ENCODE measurements at regions of chrX and their contacts with region 1.

Region 1: GRCh38 chrX:7996414-7996813 is 69.2 kb upstream of the PNPLA4 start:
- DNase-seq: peak in 1 of 2 experiments; percentile 21
- H3K4me3 ChIP-seq: no peak overlapping the region
- H3K4me3 Mint-ChIP-seq: no peak overlapping the region
- H3K27ac Mint-ChIP-seq: no peak overlapping the region
- H3K4me1 ChIP-seq: no peaks in the 10 kb centered on the region
- H3K4me1 Mint-ChIP-seq: no peaks in the 10 kb centered on the region
- H3K27me3 ChIP-seq: no peaks in the 10 kb centered on the region
- H3K27me3 Mint-ChIP-seq: no peaks in the 10 kb centered on the region
- CTCF ChIP-seq: peak; percentile 36 to 39

Region 2: GRCh38 chrX:8235026-8235425 is 238.6 kb after region 1 on chrX:
- CTCF ChIA-PET with region 1: no interaction called
- POLR2A ChIA-PET with region 1: no interaction called
- intact Hi-C with region 1: loop called (anchors 5 kb)
- DNase-seq: no peak
- H3K4me3 ChIP-seq: no peak overlapping the region
- H3K4me3 Mint-ChIP-seq: no peak overlapping the region
- H3K27ac Mint-ChIP-seq: no peak overlapping the region
- H3K4me1 ChIP-seq: no peaks in the 10 kb centered on the region
- H3K4me1 Mint-ChIP-seq: no peaks in the 10 kb centered on the region
- H3K27me3 ChIP-seq: no peaks in the 10 kb centered on the region
- H3K27me3 Mint-ChIP-seq: no peaks in the 10 kb centered on the region
- CTCF ChIP-seq: no peak

Region 3: GRCh38 chrX:8364369-8365141 is 368.1 kb after region 1 on chrX:
- CTCF ChIA-PET with region 1: no interaction called
- POLR2A ChIA-PET with region 1: no interaction called
- intact Hi-C with region 1: loop called (anchors 10 kb)
- DNase-seq: peak; percentile 35 to 43
- H3K4me3 ChIP-seq: no peak overlapping the region
- H3K4me3 Mint-ChIP-seq: no peak overlapping the region
- H3K27ac Mint-ChIP-seq: no peak overlapping the region
- H3K4me1 ChIP-seq: no peaks in the 10 kb centered on the region
- H3K4me1 Mint-ChIP-seq: no peaks in the 10 kb centered on the region
- H3K27me3 ChIP-seq: no peaks in the 10 kb centered on the region
- H3K27me3 Mint-ChIP-seq: no peaks in the 10 kb centered on the region
- CTCF ChIP-seq: peak; percentile 42 to 46

Region 4: DNA sequence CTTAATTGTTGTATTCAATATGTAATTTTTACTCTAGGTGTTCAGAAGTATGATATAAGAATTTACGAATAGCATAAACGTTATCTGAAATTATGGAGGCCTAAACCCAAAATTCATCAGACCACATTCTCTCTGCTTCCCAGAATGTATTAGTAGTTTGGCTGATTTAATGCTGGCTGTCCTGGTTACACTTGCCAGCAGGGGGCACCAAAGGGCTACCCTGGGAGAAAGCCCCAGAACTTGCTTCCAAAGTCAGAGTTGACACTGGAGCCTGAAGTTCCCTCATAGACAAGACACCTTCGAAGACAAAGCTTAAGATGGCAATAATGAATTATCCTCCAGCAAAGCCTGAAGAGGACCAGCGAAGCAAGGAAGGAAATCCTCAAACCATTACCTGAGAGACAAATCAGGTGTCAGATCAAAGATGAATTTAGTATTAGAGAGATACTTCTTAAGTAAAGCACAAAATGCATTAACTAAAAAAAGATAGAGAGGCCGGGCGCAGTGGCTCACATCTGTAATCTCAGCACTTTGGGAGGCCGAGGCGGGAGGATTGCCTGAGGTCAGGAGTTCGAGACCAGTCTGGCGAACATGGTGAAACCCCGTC is 746.8 kb after region 1 on chrX:
- CTCF ChIA-PET with region 1: no interaction called
- POLR2A ChIA-PET with region 1: no interaction called
- intact Hi-C with region 1: loop called (anchors 2 kb)
- DNase-seq: peak; percentile 46 to 65
- H3K4me3 ChIP-seq: no peak overlapping the region
- H3K4me3 Mint-ChIP-seq: no peak overlapping the region
- H3K27ac Mint-ChIP-seq: no peak overlapping the region
- H3K4me1 ChIP-seq: no peaks in the 10 kb centered on the region
- H3K4me1 Mint-ChIP-seq: no peaks in the 10 kb centered on the region
- H3K27me3 ChIP-seq: no peaks in the 10 kb centered on the region
- H3K27me3 Mint-ChIP-seq: peaks cover 6% of the 10 kb centered on the region
- CTCF ChIP-seq: peak; percentile 61 to 63